CD8-positive, alpha-beta T cell (primary cell): ENCODE measurements at regions of chr11 and their contacts with region 1.

Region 1: DNA sequence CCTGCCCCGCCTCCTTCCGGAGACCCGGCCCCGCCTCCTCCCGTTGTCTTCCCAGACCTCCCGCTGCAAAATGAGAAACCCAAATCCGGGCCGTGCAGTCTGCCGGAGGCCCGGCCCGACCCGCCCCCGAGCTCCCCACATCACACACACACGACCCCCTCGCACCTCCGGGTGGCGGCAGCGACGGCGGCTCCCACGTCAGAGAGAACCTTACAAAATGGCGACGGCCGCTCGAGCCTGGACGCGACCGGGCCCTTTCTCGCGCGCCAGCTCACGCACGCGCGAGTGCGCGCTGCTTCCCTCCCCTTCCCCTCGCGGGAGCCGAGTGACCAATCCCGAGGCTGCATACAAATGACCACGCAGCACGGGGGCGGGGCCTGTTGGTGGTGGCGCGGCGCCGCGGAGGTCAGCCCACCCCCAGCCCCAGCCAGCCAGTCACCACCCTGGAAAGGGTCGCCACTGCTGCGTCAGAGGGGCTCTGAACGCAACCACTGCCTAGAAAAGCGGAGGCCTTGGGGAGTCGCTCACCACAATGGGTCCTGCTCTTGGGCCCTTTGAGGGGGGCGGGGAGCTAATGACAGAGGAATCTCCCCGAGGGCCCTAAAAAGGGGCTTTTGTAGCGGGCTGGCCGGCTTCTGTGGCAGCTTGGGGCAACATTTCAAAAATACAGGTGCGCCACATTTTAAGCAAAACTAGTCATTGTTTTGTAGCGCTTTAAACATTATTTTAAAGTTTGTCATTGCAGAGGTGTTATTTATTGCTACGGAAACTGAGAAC is at the start of gene RBM4B:
- DNase-seq: peak; percentile 92 to 99 (median 96)
- ATAC-seq: peak; percentile 84
- H3K4me3 ChIP-seq: peak within 1 kb of the TSS; percentile 79 to 83
- H3K4me3 Mint-ChIP-seq: peak within 1 kb of the TSS; percentile 88
- H3K27ac ChIP-seq: peak within 1 kb of the TSS; percentile 92 to 97
- H3K27ac Mint-ChIP-seq: peak within 1 kb of the TSS; percentile 99
- H3K4me1 ChIP-seq: peaks cover 24% of the 10 kb centered on the region
- H3K4me1 Mint-ChIP-seq: peaks cover 36% of the 10 kb centered on the region
- H3K27me3 ChIP-seq: no peaks in the 10 kb centered on the region
- H3K27me3 Mint-ChIP-seq: no peaks in the 10 kb centered on the region
- CTCF ChIP-seq: no peak
- total RNA-seq, gene RBM4B: 5.4 to 5.6 TPM

Region 2: DNA sequence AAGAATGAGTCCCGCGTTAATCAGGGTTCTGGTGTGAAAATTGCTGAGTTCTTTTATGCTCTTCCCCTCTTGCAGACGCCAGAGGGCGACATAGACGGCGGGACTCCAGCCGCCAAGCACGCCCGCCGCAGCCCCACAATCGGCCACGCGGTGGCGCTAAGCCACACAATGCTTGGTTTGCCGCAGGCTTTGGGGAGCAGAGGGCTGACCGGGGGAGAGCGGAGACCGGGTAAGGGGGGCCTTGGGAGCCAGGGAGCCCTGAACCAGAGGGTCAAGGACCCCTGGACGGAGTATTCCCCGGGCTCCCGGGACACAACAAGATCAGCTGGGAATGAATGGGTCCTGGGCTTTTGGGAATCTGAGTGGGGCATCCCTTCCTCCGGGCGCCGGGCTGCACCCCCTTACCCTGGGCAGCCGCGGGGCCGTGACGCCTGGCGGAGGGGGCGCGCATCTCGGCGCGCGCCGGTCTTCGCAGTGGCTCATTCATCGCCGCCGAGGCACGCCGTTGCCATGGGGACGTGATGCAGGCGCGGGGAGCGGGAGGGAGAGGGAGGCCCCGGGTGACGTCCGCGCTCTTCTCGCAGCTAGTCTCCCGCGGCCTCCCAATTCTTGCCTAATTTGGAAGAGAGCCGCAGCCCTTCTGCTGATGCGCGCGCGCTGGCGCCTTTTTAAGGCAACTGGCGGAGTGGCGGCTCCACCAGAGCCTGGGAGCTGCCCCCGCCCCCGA is 269.1 kb before region 1 on chr11:
- CTCF ChIA-PET with region 1: interaction called, 77 read pairs
- POLR2A ChIA-PET with region 1: interaction called, 5 read pairs
- intact Hi-C with region 1: no loop called
- DNase-seq: peak; percentile 88 to 97 (median 92)
- ATAC-seq: peak; percentile 85
- H3K4me3 ChIP-seq: peak overlapping the region; percentile 18 to 62
- H3K4me3 Mint-ChIP-seq: peak overlapping the region; percentile 79
- H3K27ac ChIP-seq: no peak overlapping the region
- H3K27ac Mint-ChIP-seq: no peak overlapping the region
- H3K4me1 ChIP-seq: peaks cover 8% of the 10 kb centered on the region
- H3K4me1 Mint-ChIP-seq: peaks cover 4% of the 10 kb centered on the region
- H3K27me3 ChIP-seq: peaks cover 4 to 14% of the 10 kb centered on the region in 2 experiments
- H3K27me3 Mint-ChIP-seq: peaks cover 41% of the 10 kb centered on the region
- CTCF ChIP-seq: peak; percentile 100

Region 3: GRCh38 chr11:66466225-66467027 is 211.4 kb before region 1 on chr11 and contains the start of gene PELI3:
- CTCF ChIA-PET with region 1: interaction called, 4 read pairs
- POLR2A ChIA-PET with region 1: interaction called, 3 read pairs
- intact Hi-C with region 1: loop called (anchors 1 kb)
- DNase-seq: peak; percentile 92 to 97 (median 95)
- ATAC-seq: peak; percentile 92
- H3K4me3 ChIP-seq: peak within 1 kb of the TSS; percentile 59 to 92
- H3K4me3 Mint-ChIP-seq: peak within 1 kb of the TSS; percentile 91
- H3K27ac ChIP-seq: peak within 1 kb of the TSS; percentile 56 to 74
- H3K27ac Mint-ChIP-seq: peak within 1 kb of the TSS; percentile 91
- H3K4me1 ChIP-seq: peaks cover 20% of the 10 kb centered on the region
- H3K4me1 Mint-ChIP-seq: peaks cover 22% of the 10 kb centered on the region
- H3K27me3 ChIP-seq: no peaks in the 10 kb centered on the region
- H3K27me3 Mint-ChIP-seq: no peaks in the 10 kb centered on the region
- CTCF ChIP-seq: no peak
- total RNA-seq, gene PELI3: 12.6 to 16.8 TPM

Region 4: DNA sequence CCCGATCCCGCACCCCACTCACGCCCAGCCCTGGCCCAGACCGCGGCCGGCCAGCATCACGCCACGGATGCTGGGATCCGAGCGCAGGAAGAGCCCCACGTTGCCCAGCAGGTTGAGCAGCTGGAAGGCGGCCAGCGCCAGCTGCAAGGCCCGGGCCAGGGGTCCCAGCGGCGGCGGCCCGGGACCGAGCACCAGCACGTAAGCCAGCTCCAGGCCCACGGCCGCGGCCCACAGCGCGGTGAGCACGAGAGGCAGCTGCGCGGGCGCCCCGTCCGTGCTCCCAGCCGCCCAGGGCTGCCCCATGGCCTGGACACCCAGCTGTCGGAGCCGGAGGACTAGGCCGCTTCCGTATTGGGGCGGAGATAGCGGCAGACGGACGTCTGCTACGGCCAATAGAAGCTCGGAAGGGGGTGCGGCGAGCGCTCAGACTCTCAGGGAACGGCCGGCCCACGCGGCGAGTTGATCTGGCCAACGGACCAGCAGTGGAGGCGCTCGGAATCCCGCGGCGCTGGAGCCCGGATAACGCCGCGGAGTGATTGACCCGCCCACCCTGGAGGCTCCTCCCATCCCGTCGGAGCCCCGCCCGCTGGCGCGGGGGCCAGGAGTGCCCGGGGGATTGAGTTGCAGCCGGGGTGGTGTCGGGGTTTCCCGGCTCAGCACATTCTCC is 132.0 kb before region 1 on chr11 and contains the start of gene ZDHHC24:
- CTCF ChIA-PET with region 1: interaction called, 15 read pairs
- POLR2A ChIA-PET with region 1: interaction called, 23 read pairs
- intact Hi-C with region 1: loop called (anchors 1 kb)
- DNase-seq: peak; percentile 57 to 93 (median 78)
- ATAC-seq: peak; percentile 81
- H3K4me3 ChIP-seq: peak within 1 kb of the TSS; percentile 68 to 97
- H3K4me3 Mint-ChIP-seq: peak within 1 kb of the TSS; percentile 84
- H3K27ac ChIP-seq: peak within 1 kb of the TSS; percentile 79 to 83
- H3K27ac Mint-ChIP-seq: peak within 1 kb of the TSS; percentile 92
- H3K4me1 ChIP-seq: peaks cover 31% of the 10 kb centered on the region
- H3K4me1 Mint-ChIP-seq: peaks cover 40% of the 10 kb centered on the region
- H3K27me3 ChIP-seq: no peaks in the 10 kb centered on the region
- H3K27me3 Mint-ChIP-seq: no peaks in the 10 kb centered on the region
- CTCF ChIP-seq: no peak
- total RNA-seq, gene ZDHHC24: 15.0 to 15.9 TPM

Region 5: DNA sequence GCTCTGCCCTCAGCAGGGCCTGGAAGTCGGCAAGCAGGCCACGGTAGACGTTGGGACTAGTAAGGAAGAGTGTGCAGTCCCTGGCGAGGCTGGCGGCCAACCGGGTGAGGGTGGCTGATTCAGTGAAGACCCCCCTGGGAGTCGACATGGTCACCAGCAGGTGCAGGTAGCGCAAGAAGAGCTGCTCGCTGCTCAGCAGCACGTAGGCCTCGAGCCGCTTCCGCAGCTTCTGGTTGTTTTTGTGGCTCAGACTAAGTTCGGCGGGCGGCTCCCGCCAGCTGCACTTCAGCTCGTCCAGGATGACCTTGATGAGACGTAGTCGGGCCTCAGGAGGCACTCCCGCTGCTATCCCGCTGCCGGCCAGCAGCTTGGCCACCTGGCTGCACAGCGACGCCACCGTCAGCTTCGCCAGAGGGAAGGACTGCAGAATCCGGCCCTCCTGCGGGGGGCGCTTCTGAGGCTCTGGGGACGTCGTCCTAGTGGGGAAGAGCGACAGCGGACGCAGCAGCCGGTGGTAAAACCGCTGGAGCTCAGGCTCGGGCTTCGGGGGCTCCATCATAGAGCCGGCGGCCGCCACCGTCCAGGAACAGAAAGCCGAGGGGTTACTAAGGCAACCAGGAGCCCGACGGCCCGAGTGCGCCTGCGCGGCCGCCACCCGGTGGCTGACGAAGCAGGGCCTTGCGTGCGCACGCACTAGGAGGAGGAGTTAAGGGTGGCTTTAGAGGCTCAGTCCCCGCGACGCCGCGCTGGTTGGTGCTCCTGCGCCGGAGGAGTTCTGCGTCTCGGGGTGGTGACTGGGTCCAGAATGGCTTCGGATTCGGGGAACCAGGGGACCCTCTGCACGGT is 85.1 kb before region 1 on chr11 and contains the starts of genes CCDC87 and CCS:
- CTCF ChIA-PET with region 1: interaction called, 63 read pairs
- POLR2A ChIA-PET with region 1: interaction called, 8 read pairs
- intact Hi-C with region 1: loop called (anchors 1 kb)
- DNase-seq: peak; percentile 98 to 100 (median 99)
- ATAC-seq: peak; percentile 97
- H3K4me3 ChIP-seq: peak within 1 kb of the TSS; percentile 68 to 97
- H3K4me3 Mint-ChIP-seq: peak within 1 kb of the TSS; percentile 100
- H3K27ac ChIP-seq: peak within 1 kb of the TSS; percentile 84 to 86
- H3K27ac Mint-ChIP-seq: peak within 1 kb of the TSS; percentile 99
- H3K4me1 ChIP-seq: peaks cover 33% of the 10 kb centered on the region
- H3K4me1 Mint-ChIP-seq: peaks cover 39% of the 10 kb centered on the region
- H3K27me3 ChIP-seq: no peaks in the 10 kb centered on the region
- H3K27me3 Mint-ChIP-seq: no peaks in the 10 kb centered on the region
- CTCF ChIP-seq: peak; percentile 55
- total RNA-seq, gene CCDC87: 0.53 to 0.65 TPM
- total RNA-seq, gene CCS: 30.0 to 32.3 TPM

Region 6: DNA sequence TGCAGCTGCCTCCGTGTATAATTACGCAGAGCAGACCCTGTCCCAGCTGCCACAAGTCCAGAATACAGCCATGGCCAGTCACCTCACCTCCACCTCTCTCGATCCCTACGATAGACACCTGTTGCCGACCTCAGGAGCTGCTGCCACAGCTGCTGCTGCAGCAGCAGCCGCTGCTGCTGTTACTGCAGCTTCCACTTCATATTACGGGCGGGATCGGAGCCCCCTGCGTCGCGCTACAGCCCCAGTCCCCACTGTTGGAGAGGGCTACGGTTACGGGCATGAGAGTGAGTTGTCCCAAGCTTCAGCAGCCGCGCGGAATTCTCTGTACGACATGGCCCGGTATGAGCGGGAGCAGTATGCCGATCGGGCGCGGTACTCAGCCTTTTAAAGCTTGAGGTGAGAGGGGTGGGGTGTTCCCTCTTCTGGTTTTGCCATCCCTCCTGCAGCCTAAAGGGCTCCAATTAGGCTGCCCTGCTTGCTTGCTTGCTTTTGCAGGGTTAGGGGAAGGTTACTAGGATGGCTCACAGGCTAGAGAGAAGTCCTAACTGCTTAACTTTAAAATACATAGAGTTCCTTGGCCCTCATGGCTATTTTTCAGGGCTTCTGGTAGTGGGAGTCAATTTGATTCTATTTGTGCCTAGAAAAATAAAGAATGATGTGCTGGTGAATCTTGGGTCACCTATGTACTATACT is 33.9 kb before region 1 on chr11:
- CTCF ChIA-PET with region 1: interaction called, 32 read pairs
- POLR2A ChIA-PET with region 1: interaction called, 40 read pairs
- intact Hi-C with region 1: no loop called
- DNase-seq: no peak
- ATAC-seq: no peak
- H3K4me3 ChIP-seq: no peak overlapping the region
- H3K4me3 Mint-ChIP-seq: peak overlapping the region; percentile 98
- H3K27ac ChIP-seq: no peak overlapping the region
- H3K27ac Mint-ChIP-seq: no peak overlapping the region
- H3K4me1 ChIP-seq: peaks cover 79% of the 10 kb centered on the region
- H3K4me1 Mint-ChIP-seq: peaks cover 89% of the 10 kb centered on the region
- H3K27me3 ChIP-seq: no peaks in the 10 kb centered on the region
- H3K27me3 Mint-ChIP-seq: no peaks in the 10 kb centered on the region
- CTCF ChIP-seq: no peak

Region 7: DNA sequence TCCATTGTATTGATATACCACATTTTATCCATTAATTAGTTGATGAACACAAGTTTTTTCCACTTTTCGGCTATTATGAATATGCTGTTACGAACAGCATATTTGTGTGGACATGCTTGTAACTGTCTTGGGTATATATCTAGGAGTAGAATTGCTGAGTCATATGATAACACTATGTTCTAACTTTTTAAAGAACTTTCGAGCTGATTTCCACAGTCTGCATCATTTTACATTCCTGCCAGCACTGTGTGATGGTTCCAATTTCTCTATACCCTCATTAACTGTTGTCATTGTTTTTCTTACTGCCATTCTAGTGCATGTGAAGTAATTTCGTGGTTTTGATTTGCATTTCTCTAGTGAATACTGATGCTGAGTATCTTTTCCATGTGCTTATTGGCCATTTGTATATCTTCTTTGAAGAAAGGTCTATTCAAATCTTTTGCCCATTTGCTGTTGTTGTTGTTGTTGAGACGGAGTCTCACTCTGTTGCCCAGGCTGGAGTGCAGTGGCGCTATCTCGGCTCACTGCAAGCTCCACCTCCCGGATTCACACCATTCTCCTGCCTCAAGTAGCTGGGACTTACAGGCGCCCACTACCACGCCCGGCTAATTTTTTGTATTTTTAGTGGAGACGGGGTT is 158.1 kb after region 1 on chr11:
- CTCF ChIA-PET with region 1: interaction called, 5 read pairs
- POLR2A ChIA-PET with region 1: interaction called, 3 read pairs
- intact Hi-C with region 1: loop called in 1 of 2 experiments (anchors 1 kb)
- DNase-seq: no peak
- ATAC-seq: no peak
- H3K4me3 ChIP-seq: no peak overlapping the region
- H3K4me3 Mint-ChIP-seq: no peak overlapping the region
- H3K27ac ChIP-seq: no peak overlapping the region
- H3K27ac Mint-ChIP-seq: no peak overlapping the region
- H3K4me1 ChIP-seq: peaks cover 17% of the 10 kb centered on the region
- H3K4me1 Mint-ChIP-seq: peaks cover 33% of the 10 kb centered on the region
- H3K27me3 ChIP-seq: no peaks in the 10 kb centered on the region
- H3K27me3 Mint-ChIP-seq: no peaks in the 10 kb centered on the region
- CTCF ChIP-seq: no peak

Region 8: DNA sequence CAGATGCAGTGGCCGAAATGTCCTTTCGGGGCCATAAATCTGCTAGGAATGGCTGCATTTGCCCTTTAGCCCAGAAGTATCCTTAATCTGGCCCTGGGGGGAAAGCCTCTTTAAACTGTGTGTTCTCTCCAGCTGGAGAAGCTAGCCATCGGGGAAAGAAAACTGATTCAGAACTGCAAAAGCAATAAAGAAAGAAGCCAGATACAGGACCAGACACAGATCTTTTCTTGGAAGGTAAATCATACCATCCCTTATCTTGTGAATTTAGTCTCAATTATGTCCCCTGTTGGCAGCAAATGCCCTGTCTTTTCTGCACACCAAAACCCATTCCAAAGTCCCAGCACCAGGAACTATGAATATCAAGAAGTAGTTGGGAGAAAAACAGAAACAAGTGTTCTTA is 254.8 kb after region 1 on chr11:
- CTCF ChIA-PET with region 1: no interaction called
- POLR2A ChIA-PET with region 1: no interaction called
- intact Hi-C with region 1: no loop called
- DNase-seq: no peak
- ATAC-seq: no peak
- H3K4me3 ChIP-seq: no peak overlapping the region
- H3K4me3 Mint-ChIP-seq: no peak overlapping the region
- H3K27ac ChIP-seq: no peak overlapping the region
- H3K27ac Mint-ChIP-seq: no peak overlapping the region
- H3K4me1 ChIP-seq: no peaks in the 10 kb centered on the region
- H3K4me1 Mint-ChIP-seq: no peaks in the 10 kb centered on the region
- H3K27me3 ChIP-seq: no peaks in the 10 kb centered on the region
- H3K27me3 Mint-ChIP-seq: no peaks in the 10 kb centered on the region
- CTCF ChIP-seq: no peak